ENCODE measurements at regions of chr9 and their contacts with region 1.

Region 1: GRCh38 chr9:87950765-87951488 is 23.4 kb downstream of the CDK20 start:
- DNase-seq: peak; percentile 32
- H3K4me3 ChIP-seq: no peak overlapping the region
- H3K27ac ChIP-seq: no peak overlapping the region
- H3K4me1 ChIP-seq: no peaks in the 10 kb centered on the region
- H3K27me3 ChIP-seq: peaks cover 0 to 2% of the 10 kb centered on the region in 2 experiments
- CTCF ChIP-seq: peak; percentile 31 to 50
- POLR2A ChIP-seq: no peak

Region 2: DNA sequence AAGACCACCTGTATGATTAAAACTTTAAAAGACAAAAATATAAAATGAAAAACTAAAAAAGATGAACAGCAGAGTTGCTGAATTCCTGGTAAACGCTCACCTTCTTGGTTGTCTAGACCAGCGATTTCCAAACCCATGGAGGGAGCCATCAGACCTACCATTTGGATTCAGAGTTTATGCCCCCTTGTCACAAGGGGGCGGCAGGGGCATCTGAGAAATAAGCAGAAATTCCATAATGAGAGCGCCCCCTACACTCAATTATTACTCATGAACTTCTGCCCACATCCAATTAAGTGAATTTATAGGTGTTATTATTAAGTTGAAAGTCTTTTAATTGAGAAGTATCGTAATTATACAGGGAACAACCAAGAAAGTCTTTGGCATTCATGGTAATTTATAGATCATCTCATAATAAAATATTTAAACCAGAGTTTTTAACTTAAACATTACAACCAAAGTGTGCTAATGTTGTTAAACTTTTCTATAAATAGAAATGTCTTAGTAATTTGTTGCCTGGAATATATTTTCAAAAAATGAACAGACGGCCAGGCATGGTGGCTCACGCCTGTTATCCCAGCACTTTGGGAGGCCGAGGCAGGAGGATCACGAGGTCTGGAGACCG is 222.6 kb after region 1 on chr9:
- CTCF ChIA-PET with region 1: no interaction called
- POLR2A ChIA-PET with region 1: no interaction called
- dilution Hi-C with region 1: no loop called
- intact Hi-C with region 1: loop called (anchors 1 kb)
- DNase-seq: peak; percentile 74
- H3K4me3 ChIP-seq: no peak overlapping the region
- H3K27ac ChIP-seq: no peak overlapping the region
- H3K4me1 ChIP-seq: no peaks in the 10 kb centered on the region
- H3K27me3 ChIP-seq: no peaks in the 10 kb centered on the region
- CTCF ChIP-seq: peak; percentile 79 to 84
- POLR2A ChIP-seq: no peak